CD4-positive, alpha-beta memory T cell (primary cell): ENCODE measurements at regions of chr7 and their contacts with region 1.

Region 1: GRCh38 chr7:129163875-129164544 is 19.5 kb downstream of the TSPAN33 start:
- DNase-seq: peak in 4 of 5 donors; percentile 22 to 37 (median 24)
- H3K4me3 ChIP-seq: no peak overlapping the region
- H3K4me3 Mint-ChIP-seq: no peak overlapping the region
- H3K27ac ChIP-seq: no peak overlapping the region
- H3K27ac Mint-ChIP-seq: no peak overlapping the region
- H3K4me1 ChIP-seq: peaks cover 4% of the 10 kb centered on the region
- H3K4me1 Mint-ChIP-seq: peaks cover 2 to 5% (median 3%) of the 10 kb centered on the region in 4 donors
- H3K27me3 ChIP-seq: no peaks in the 10 kb centered on the region
- H3K27me3 Mint-ChIP-seq: peaks cover 0 to 10% of the 10 kb centered on the region in 2 donors

Region 2: GRCh38 chr7:128986609-128987008 is 177.4 kb before region 1 on chr7:
- CTCF ChIA-PET with region 1: no interaction called
- POLR2A ChIA-PET with region 1: no interaction called
- intact Hi-C with region 1: no loop called
- DNase-seq: no peak
- H3K4me3 ChIP-seq: no peak overlapping the region
- H3K4me3 Mint-ChIP-seq: no peak overlapping the region
- H3K27ac ChIP-seq: no peak overlapping the region
- H3K27ac Mint-ChIP-seq: peak overlapping the region in 2 of 7 donors; percentile 45 to 63
- H3K4me1 ChIP-seq: no peaks in the 10 kb centered on the region
- H3K4me1 Mint-ChIP-seq: peaks cover 0 to 1% (median 0%) of the 10 kb centered on the region in 4 donors
- H3K27me3 ChIP-seq: no peaks in the 10 kb centered on the region
- H3K27me3 Mint-ChIP-seq: no peaks in the 10 kb centered on the region

Region 3: GRCh38 chr7:129024125-129024524 is 139.9 kb before region 1 on chr7:
- CTCF ChIA-PET with region 1: no interaction called
- POLR2A ChIA-PET with region 1: no interaction called
- intact Hi-C with region 1: no loop called
- DNase-seq: no peak
- H3K4me3 ChIP-seq: no peak overlapping the region
- H3K4me3 Mint-ChIP-seq: peak overlapping the region in 1 of 8 donors; percentile 22
- H3K27ac ChIP-seq: no peak overlapping the region
- H3K27ac Mint-ChIP-seq: peak overlapping the region in 2 of 7 donors; percentile 63 to 77
- H3K4me1 ChIP-seq: peaks cover 21% of the 10 kb centered on the region
- H3K4me1 Mint-ChIP-seq: peaks cover 36 to 55% (median 42%) of the 10 kb centered on the region in 4 donors
- H3K27me3 ChIP-seq: no peaks in the 10 kb centered on the region
- H3K27me3 Mint-ChIP-seq: no peaks in the 10 kb centered on the region

Region 4: GRCh38 chr7:129072479-129073011 is 91.5 kb before region 1 on chr7:
- CTCF ChIA-PET with region 1: no interaction called
- POLR2A ChIA-PET with region 1: no interaction called
- intact Hi-C with region 1: no loop called
- DNase-seq: no peak
- H3K4me3 ChIP-seq: no peak overlapping the region
- H3K4me3 Mint-ChIP-seq: no peak overlapping the region
- H3K27ac ChIP-seq: no peak overlapping the region
- H3K27ac Mint-ChIP-seq: no peak overlapping the region
- H3K4me1 ChIP-seq: no peaks in the 10 kb centered on the region
- H3K4me1 Mint-ChIP-seq: peaks cover 0 to 3% (median 0%) of the 10 kb centered on the region in 4 donors
- H3K27me3 ChIP-seq: no peaks in the 10 kb centered on the region
- H3K27me3 Mint-ChIP-seq: peaks cover 6 to 17% of the 10 kb centered on the region in 2 donors

Region 5: GRCh38 chr7:129144834-129145668 is 19.0 kb before region 1 on chr7:
- CTCF ChIA-PET with region 1: interaction called, 23 read pairs
- POLR2A ChIA-PET with region 1: no interaction called
- intact Hi-C with region 1: no loop called
- DNase-seq: peak in 4 of 5 donors; percentile 13 to 21 (median 18)
- H3K4me3 ChIP-seq: peak overlapping the region in 1 of 2 donors; percentile 43
- H3K4me3 Mint-ChIP-seq: peak overlapping the region; percentile 81 to 86 (median 84)
- H3K27ac ChIP-seq: no peak overlapping the region
- H3K27ac Mint-ChIP-seq: peak overlapping the region in 2 of 7 donors; percentile 59 to 72
- H3K4me1 ChIP-seq: peaks cover 11% of the 10 kb centered on the region
- H3K4me1 Mint-ChIP-seq: peaks cover 8 to 20% (median 11%) of the 10 kb centered on the region in 4 donors
- H3K27me3 ChIP-seq: no peaks in the 10 kb centered on the region
- H3K27me3 Mint-ChIP-seq: peaks cover 16 to 23% of the 10 kb centered on the region in 2 donors

Region 6: GRCh38 chr7:129150199-129150996 is 13.6 kb before region 1 on chr7:
- CTCF ChIA-PET with region 1: interaction called, 23 read pairs
- POLR2A ChIA-PET with region 1: no interaction called
- intact Hi-C with region 1: no loop called
- DNase-seq: no peak
- H3K4me3 ChIP-seq: no peak overlapping the region
- H3K4me3 Mint-ChIP-seq: no peak overlapping the region
- H3K27ac ChIP-seq: no peak overlapping the region
- H3K27ac Mint-ChIP-seq: no peak overlapping the region
- H3K4me1 ChIP-seq: peaks cover under 1% of the 10 kb centered on the region
- H3K4me1 Mint-ChIP-seq: peaks cover 0 to 6% (median 3%) of the 10 kb centered on the region in 4 donors
- H3K27me3 ChIP-seq: no peaks in the 10 kb centered on the region
- H3K27me3 Mint-ChIP-seq: peaks cover 3 to 20% of the 10 kb centered on the region in 2 donors

Region 7: GRCh38 chr7:129210256-129210988 is 46.4 kb after region 1 on chr7:
- CTCF ChIA-PET with region 1: interaction called, 13 read pairs
- POLR2A ChIA-PET with region 1: no interaction called
- intact Hi-C with region 1: no loop called
- DNase-seq: peak; percentile 29 to 50 (median 39)
- H3K4me3 ChIP-seq: no peak overlapping the region
- H3K4me3 Mint-ChIP-seq: no peak overlapping the region
- H3K27ac ChIP-seq: no peak overlapping the region
- H3K27ac Mint-ChIP-seq: no peak overlapping the region
- H3K4me1 ChIP-seq: no peaks in the 10 kb centered on the region
- H3K4me1 Mint-ChIP-seq: no peaks in the 10 kb centered on the region
- H3K27me3 ChIP-seq: no peaks in the 10 kb centered on the region
- H3K27me3 Mint-ChIP-seq: peaks cover 2 to 4% of the 10 kb centered on the region in 2 donors

Region 8: DNA sequence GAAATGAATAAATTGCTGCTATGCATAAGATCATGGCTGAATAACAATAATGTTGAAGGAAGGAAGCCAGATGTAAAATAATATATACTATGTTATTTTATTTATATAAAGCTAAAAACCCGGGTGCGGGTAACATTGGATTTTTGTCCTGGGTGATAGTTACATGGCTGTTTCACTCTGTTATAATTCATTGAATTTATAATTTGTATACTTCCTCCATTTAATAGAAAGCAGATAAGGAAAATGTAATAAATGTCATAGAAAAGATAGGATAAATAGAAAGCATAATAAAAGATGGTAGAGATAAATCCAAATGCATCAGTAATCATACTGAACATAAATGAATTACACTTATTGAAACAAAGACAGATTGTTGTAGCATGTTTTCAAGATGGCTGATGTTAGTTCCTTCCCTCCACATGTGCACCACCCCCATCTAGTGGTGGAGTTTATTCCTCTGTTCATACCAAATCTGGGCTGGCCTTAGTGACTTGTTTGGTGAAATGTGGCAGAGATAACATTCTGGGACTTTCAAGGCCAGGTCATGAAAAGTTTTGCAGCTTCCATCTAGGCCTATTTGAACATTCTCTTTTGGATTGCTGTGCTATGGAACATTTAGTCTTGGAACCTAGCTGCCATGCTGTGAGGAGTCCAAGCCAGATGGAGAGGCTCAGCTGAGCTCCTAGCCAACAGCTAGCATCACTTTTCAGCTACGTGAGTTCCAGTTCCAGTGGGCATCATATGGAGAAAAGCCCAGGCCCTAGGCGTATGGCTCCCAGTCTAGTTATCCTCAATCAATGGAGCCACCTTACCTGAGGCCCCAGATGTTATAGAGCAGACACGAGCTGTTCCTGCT is 107.7 kb after region 1 on chr7:
- CTCF ChIA-PET with region 1: interaction called, 8 read pairs
- POLR2A ChIA-PET with region 1: no interaction called
- intact Hi-C with region 1: loop called (anchors 1 kb)
- DNase-seq: peak; percentile 70 to 73 (median 72)
- H3K4me3 ChIP-seq: no peak overlapping the region
- H3K4me3 Mint-ChIP-seq: peak overlapping the region in 4 of 8 donors; percentile 22 to 76 (median 50)
- H3K27ac ChIP-seq: no peak overlapping the region
- H3K27ac Mint-ChIP-seq: peak overlapping the region in 3 of 7 donors; percentile 33 to 60 (median 36)
- H3K4me1 ChIP-seq: no peaks in the 10 kb centered on the region
- H3K4me1 Mint-ChIP-seq: peaks cover 0 to 6% (median 5%) of the 10 kb centered on the region in 4 donors
- H3K27me3 ChIP-seq: no peaks in the 10 kb centered on the region
- H3K27me3 Mint-ChIP-seq: no peaks in the 10 kb centered on the region

Region 9: DNA sequence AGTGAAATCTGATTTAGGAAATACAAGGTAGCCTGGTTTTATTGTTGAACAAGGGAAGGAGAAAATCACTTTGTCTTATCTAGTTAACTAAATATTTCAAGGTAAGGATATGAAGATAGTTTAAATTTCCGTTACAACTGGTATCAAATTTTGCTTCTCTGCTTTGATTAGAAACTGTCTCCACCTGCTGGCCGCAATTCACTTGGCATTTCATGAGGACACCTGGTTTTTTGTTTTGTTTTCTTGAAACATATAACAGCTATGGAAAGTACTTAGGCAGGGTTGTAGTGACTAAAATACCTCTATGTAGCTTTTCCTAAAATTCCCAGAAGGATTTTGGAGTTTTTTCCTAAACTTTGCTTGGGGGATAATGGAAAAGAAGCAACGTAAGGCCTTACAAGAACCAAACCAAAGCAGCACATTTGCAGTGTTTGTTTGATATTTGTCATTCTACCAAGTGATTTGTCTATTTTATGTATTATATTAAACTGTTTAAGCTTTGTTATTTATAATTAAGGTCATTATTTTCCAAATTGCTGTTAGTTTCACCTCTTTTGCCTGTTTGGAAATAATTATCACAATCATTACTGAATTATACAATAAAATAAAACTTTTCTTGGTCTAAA is 134.4 kb after region 1 on chr7:
- CTCF ChIA-PET with region 1: interaction called, 12 read pairs
- POLR2A ChIA-PET with region 1: no interaction called
- intact Hi-C with region 1: no loop called
- DNase-seq: peak in 4 of 5 donors; percentile 22 to 45 (median 32)
- H3K4me3 ChIP-seq: no peak overlapping the region
- H3K4me3 Mint-ChIP-seq: no peak overlapping the region
- H3K27ac ChIP-seq: no peak overlapping the region
- H3K27ac Mint-ChIP-seq: peak overlapping the region in 1 of 7 donors; percentile 61
- H3K4me1 ChIP-seq: no peaks in the 10 kb centered on the region
- H3K4me1 Mint-ChIP-seq: peaks cover 0 to 1% (median 0%) of the 10 kb centered on the region in 4 donors
- H3K27me3 ChIP-seq: no peaks in the 10 kb centered on the region
- H3K27me3 Mint-ChIP-seq: no peaks in the 10 kb centered on the region

Region 10: GRCh38 chr7:129468087-129468486 is 304.1 kb after region 1 on chr7:
- CTCF ChIA-PET with region 1: interaction called, 7 read pairs
- POLR2A ChIA-PET with region 1: no interaction called
- intact Hi-C with region 1: loop called (anchors 2 kb)
- DNase-seq: no peak
- H3K4me3 ChIP-seq: no peak overlapping the region
- H3K4me3 Mint-ChIP-seq: no peak overlapping the region
- H3K27ac ChIP-seq: no peak overlapping the region
- H3K27ac Mint-ChIP-seq: no peak overlapping the region
- H3K4me1 ChIP-seq: no peaks in the 10 kb centered on the region
- H3K4me1 Mint-ChIP-seq: no peaks in the 10 kb centered on the region
- H3K27me3 ChIP-seq: no peaks in the 10 kb centered on the region
- H3K27me3 Mint-ChIP-seq: no peaks in the 10 kb centered on the region